Gastrocnemius medialis (tissue), 4 donors: ENCODE measurements at regions of chr1 and their contacts with region 1.

Region 1: GRCh38 chr1:226365831-226366231 is 42.1 kb downstream of the PARP1 start:
- DNase-seq: no peak
- ATAC-seq: no peak
- H3K4me3 ChIP-seq: no peak overlapping the region
- H3K27ac ChIP-seq: no peak overlapping the region
- H3K4me1 ChIP-seq: peaks cover 9 to 15% of the 10 kb centered on the region in 2 donors
- H3K27me3 ChIP-seq: no peaks in the 10 kb centered on the region
- CTCF ChIP-seq: no peak
- POLR2A ChIP-seq: no peak

Region 2: GRCh38 chr1:226397955-226398636 is 32.3 kb after region 1 on chr1:
- in situ Hi-C with region 1: no loop called
- intact Hi-C with region 1: loop called (anchors 1 kb)
- DNase-seq: no peak
- ATAC-seq: no peak
- H3K4me3 ChIP-seq: no peak overlapping the region
- H3K27ac ChIP-seq: peak overlapping the region; percentile 74 to 82 (median 75)
- H3K4me1 ChIP-seq: peaks cover 52 to 54% of the 10 kb centered on the region in 2 donors
- H3K27me3 ChIP-seq: no peaks in the 10 kb centered on the region
- CTCF ChIP-seq: no peak
- POLR2A ChIP-seq: no peak

Region 3: GRCh38 chr1:226457307-226457712 is 91.5 kb after region 1 on chr1:
- in situ Hi-C with region 1: no loop called
- intact Hi-C with region 1: no loop called
- DNase-seq: no peak
- ATAC-seq: no peak
- H3K4me3 ChIP-seq: no peak overlapping the region
- H3K27ac ChIP-seq: no peak overlapping the region
- H3K4me1 ChIP-seq: no peaks in the 10 kb centered on the region
- H3K27me3 ChIP-seq: no peaks in the 10 kb centered on the region
- CTCF ChIP-seq: no peak
- POLR2A ChIP-seq: no peak

Region 4: DNA sequence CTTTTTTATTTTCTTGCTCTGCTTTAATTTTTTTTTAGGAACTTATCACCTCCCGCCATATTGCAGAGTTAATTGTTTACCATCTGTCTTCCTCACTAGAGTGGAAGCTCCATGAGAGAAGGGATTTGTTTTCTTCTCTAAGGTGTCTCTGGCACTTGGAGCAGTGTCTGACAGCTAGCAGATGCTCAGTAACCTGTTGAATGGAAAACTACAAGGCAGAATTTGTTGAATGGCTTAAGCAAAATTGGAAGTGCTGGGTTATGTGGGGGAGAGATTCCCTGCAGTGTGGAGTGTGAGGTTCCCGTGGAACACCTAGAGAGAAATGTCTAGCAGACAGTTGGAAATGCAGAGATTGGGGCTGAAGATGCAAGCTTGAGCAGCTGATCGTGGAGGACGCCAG is 101.6 kb after region 1 on chr1:
- in situ Hi-C with region 1: no loop called
- intact Hi-C with region 1: no loop called
- DNase-seq: no peak
- ATAC-seq: no peak
- H3K4me3 ChIP-seq: no peak overlapping the region
- H3K27ac ChIP-seq: no peak overlapping the region
- H3K4me1 ChIP-seq: no peaks in the 10 kb centered on the region
- H3K27me3 ChIP-seq: no peaks in the 10 kb centered on the region
- CTCF ChIP-seq: no peak
- POLR2A ChIP-seq: no peak